Psoas muscle (tissue), 8 donors: ENCODE measurements at regions of chr9 and their contacts with region 1.

Region 1: DNA sequence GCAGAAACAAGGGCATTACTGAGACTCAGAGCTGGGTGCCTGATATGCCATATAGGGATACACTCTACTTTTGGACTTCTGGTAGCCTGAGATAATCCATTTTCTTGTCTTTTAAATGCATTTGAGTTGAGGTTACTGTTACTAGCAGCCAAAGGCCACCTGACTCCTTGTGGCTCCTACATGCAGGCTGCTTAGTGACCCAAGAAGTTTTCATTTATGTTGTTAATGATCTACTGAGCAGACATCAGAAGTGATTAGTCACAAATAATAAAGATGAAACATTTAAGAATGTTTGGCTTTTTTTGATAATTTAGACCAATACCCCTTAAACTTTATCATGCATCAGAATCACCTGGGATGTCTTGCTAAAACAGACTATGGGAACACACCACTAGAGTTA is 171.6 kb upstream of the TRIM32 start:
- DNase-seq: no peak
- ATAC-seq: no peak
- H3K4me3 ChIP-seq: no peak overlapping the region
- H3K27ac ChIP-seq: no peak overlapping the region
- H3K4me1 ChIP-seq: no peaks in the 10 kb centered on the region
- H3K27me3 ChIP-seq: no peaks in the 10 kb centered on the region
- CTCF ChIP-seq: no peak

Region 2: GRCh38 chr9:116451500-116452155 is 63.9 kb before region 1 on chr9:
- intact Hi-C with region 1: no loop called
- DNase-seq: no peak
- ATAC-seq: no peak
- H3K4me3 ChIP-seq: no peak overlapping the region
- H3K27ac ChIP-seq: no peak overlapping the region
- H3K4me1 ChIP-seq: no peaks in the 10 kb centered on the region
- H3K27me3 ChIP-seq: no peaks in the 10 kb centered on the region
- CTCF ChIP-seq: no peak

Region 3: DNA sequence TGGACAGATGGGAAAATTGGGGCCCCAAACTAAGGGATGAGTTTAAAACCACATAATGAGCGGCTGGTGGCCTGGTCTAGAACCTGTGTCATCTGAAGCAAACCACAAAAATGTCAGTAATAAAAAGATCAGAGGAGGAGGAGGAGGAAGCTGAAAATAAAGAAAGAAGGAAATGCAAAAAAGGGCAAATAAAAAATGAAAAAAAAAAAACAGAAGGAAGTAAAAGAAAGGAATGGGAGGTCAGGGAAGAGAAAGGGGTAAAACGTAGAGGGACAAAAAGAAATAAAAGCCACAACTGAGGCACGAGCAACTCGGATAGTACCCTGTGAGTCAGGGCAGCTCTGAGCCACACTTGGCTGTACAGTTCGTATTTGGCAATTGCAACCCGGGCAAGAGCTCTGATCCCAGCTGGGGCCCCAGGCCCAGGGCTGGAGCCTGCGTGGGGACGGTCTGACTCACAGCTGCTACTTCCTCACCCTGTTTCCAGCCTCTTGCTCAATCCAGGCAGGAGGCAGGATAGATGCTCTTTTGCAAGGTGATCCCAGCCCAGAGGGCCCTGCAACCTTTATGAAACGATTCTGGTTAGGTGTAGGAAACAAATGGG is 33.6 kb after region 1 on chr9:
- intact Hi-C with region 1: loop called in 1 of 2 experiments (anchors 2 kb)
- DNase-seq: peak; percentile 90 to 92
- ATAC-seq: peak; percentile 97 to 99 (median 99)
- H3K4me3 ChIP-seq: no peak overlapping the region
- H3K27ac ChIP-seq: peak overlapping the region; percentile 11
- H3K4me1 ChIP-seq: peaks cover 16% of the 10 kb centered on the region
- H3K27me3 ChIP-seq: no peaks in the 10 kb centered on the region
- CTCF ChIP-seq: no peak